ENCODE measurements at regions of chr15 and their contacts with region 1.

Region 1: GRCh38 chr15:57340682-57341259 is 35.5 kb upstream of the CGNL1 start:
- DNase-seq: peak; percentile 58 to 88
- H3K4me3 ChIP-seq: no peak overlapping the region
- H3K27ac ChIP-seq: no peak overlapping the region
- H3K4me1 ChIP-seq: peaks cover 0 to 17% (median 13%) of the 10 kb centered on the region in 4 donors
- H3K27me3 ChIP-seq: no peaks in the 10 kb centered on the region
- CTCF ChIP-seq: peak in 5 of 7 experiments; percentile 65 to 87 (median 82)
- EP300 ChIP-seq: no peak
- POLR2A ChIP-seq: no peak

Region 2: DNA sequence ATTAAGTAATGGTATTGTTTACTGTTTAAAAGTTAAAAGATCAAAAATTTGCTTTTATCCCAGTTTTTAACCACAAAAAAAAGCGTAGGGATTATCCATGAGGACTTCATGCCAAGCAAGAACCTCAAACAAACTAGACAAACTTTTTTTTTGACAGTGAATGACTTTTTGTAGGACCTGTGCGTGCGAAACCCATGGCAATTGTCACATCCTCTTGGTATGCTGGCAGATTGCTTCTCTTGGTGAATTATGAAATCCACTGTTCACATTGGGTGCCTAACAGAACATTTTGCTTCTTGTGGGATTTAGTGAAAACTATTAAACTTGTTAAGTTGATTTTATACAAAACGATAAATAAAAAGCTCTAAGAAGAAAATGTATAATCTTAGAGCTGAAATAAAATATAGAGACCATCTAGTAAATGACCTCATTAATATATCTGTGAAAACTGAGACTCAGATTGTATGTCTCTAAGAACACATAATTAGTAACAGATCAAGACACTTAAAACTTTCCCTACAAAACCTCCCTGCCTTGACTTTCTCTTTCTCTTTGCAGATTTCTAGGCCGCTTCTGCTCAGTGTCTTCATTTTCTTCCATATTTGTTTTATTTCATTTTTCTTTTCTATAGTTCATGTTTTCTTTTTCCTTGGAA is 51.7 kb before region 1 on chr15:
- intact Hi-C with region 1: no loop called
- DNase-seq: no peak
- H3K4me3 ChIP-seq: no peak overlapping the region
- H3K27ac ChIP-seq: no peak overlapping the region
- H3K4me1 ChIP-seq: no peaks in the 10 kb centered on the region
- H3K27me3 ChIP-seq: no peaks in the 10 kb centered on the region
- CTCF ChIP-seq: no peak
- EP300 ChIP-seq: no peak
- POLR2A ChIP-seq: no peak

Region 3: GRCh38 chr15:57458356-57458781 is 117.6 kb after region 1 on chr15:
- intact Hi-C with region 1: no loop called
- DNase-seq: peak in 1 of 2 donors; percentile 49
- H3K4me3 ChIP-seq: no peak overlapping the region
- H3K27ac ChIP-seq: peak overlapping the region in 4 of 5 donors; percentile 26 to 52 (median 36)
- H3K4me1 ChIP-seq: peaks cover 12 to 35% (median 16%) of the 10 kb centered on the region in 4 donors
- H3K27me3 ChIP-seq: no peaks in the 10 kb centered on the region
- CTCF ChIP-seq: no peak
- EP300 ChIP-seq: no peak
- POLR2A ChIP-seq: no peak

Region 4: GRCh38 chr15:57522148-57522547 is 181.4 kb after region 1 on chr15:
- intact Hi-C with region 1: loop called (anchors 5 kb)
- DNase-seq: peak in 1 of 2 donors; percentile 78
- H3K4me3 ChIP-seq: no peak overlapping the region
- H3K27ac ChIP-seq: peak overlapping the region; percentile 18 to 70 (median 67)
- H3K4me1 ChIP-seq: peaks cover 11 to 50% (median 28%) of the 10 kb centered on the region in 4 donors
- H3K27me3 ChIP-seq: no peaks in the 10 kb centered on the region
- CTCF ChIP-seq: no peak
- EP300 ChIP-seq: no peak
- POLR2A ChIP-seq: no peak